PC-3 (cell line): ENCODE measurements at regions of chr18 and their contacts with region 1.

Region 1: DNA sequence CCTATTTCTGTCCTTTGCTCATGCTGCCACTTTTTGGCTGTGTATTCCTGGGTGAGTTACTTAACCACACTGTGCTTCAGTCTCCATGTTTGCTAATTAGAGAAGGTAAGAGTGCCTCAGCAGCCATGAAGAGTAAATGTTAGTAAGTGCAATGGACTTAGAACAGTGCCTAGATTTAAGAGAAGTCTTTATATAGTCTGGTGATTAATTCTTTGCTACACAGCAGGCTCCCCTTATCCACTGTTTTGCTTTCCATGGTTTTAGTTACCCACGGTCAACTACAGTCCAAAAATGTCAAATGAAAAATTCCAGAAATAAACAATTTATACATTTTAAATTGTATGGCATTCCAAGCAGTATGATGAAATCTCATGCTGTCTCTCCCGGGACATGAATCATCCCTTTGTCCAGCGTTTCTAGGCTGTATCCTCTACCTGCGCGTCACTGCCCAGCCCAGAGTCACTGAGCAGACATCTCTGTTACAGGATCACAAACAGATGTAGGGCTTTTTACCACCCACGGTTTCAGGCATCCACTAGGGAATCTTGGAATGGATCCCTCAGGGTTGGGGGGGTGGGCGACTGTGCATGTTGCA is 91.0 kb downstream of the CTIF start:
- DNase-seq: peak; percentile 57
- ATAC-seq: peak; percentile 99
- H3K4me3 ChIP-seq: no peak overlapping the region
- H3K27ac ChIP-seq: peak overlapping the region; percentile 41
- H3K4me1 ChIP-seq: peaks cover 10% of the 10 kb centered on the region
- H3K27me3 ChIP-seq: no peaks in the 10 kb centered on the region
- CTCF ChIP-seq: no peak

Region 2: DNA sequence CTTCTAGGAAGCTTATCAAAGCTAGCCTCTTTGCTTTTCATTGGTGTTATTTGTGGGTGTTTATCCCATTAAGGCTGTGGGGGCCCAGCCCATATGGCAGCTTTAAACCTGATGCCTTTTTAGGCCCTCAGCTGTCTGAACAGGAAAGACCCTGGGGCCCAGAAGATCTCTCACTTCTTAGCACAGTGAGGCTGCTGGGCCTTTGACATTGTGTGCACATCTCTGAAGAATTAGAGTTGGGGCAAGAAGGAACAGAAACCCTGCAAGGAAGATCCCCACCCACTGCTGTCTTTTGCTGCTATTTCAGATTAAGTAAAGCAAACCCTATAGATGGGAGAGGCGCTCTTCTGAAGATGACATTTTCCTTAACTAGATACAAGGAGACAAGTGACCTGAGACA is 949.3 kb before region 1 on chr18:
- CTCF ChIA-PET with region 1: no interaction called
- POLR2A ChIA-PET with region 1: no interaction called
- intact Hi-C with region 1: no loop called
- DNase-seq: no peak
- ATAC-seq: no peak
- H3K4me3 ChIP-seq: no peak overlapping the region
- H3K27ac ChIP-seq: no peak overlapping the region
- H3K4me1 ChIP-seq: no peaks in the 10 kb centered on the region
- H3K27me3 ChIP-seq: no peaks in the 10 kb centered on the region
- CTCF ChIP-seq: no peak

Region 3: GRCh38 chr18:48488388-48488850 is 141.4 kb before region 1 on chr18:
- CTCF ChIA-PET with region 1: no interaction called
- POLR2A ChIA-PET with region 1: no interaction called
- intact Hi-C with region 1: no loop called
- DNase-seq: peak; percentile 78
- ATAC-seq: peak; percentile 94
- H3K4me3 ChIP-seq: no peak overlapping the region
- H3K27ac ChIP-seq: no peak overlapping the region
- H3K4me1 ChIP-seq: peaks cover 11% of the 10 kb centered on the region
- H3K27me3 ChIP-seq: no peaks in the 10 kb centered on the region
- CTCF ChIP-seq: no peak

Region 4: DNA sequence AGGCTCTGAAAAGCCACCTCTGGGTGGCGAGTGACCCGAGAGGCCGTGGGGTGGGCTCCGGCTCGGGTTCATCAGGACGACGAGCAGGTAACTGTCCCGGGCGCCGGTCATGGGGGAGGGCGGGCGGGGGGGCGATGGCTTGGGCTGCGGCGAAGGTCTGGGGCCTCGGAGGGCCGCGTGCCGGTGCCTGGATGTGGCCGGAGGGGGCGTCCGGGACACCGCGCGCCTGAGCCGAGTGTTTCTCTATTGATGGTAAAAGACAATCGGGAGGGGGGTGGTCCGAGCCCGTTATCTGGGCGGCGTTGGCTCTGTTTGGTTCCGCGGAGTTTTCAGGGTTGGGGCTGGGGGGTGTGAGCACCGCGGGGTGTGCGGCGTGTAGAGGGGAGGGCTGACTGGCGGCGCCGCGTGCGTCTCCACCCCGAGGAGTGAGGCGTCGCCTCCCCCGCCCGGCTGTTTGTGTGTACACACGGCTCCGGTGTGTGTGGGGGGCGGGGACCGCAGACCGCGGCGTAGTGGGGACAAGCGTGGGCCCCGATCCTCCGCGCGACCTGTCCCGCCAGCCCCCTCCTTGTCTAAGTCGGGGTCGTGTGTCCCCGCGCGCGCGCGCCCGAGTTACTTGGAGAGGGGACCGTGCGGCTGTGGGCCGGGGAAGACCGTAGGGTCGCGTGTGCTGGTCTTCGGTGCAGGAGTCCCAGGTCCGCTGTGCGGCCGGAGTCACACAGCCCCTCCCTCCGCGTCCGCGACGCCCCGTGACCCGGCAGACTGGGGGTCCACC is 89.4 kb before region 1 on chr18:
- CTCF ChIA-PET with region 1: no interaction called
- POLR2A ChIA-PET with region 1: no interaction called
- intact Hi-C with region 1: loop called (anchors 2 kb)
- DNase-seq: peak; percentile 29
- ATAC-seq: peak; percentile 37
- H3K4me3 ChIP-seq: peak overlapping the region; percentile 76
- H3K27ac ChIP-seq: no peak overlapping the region
- H3K4me1 ChIP-seq: peaks cover 23% of the 10 kb centered on the region; the same call in 1 of the 2 replicates
- H3K27me3 ChIP-seq: no peaks in the 10 kb centered on the region
- CTCF ChIP-seq: no peak

Region 5: GRCh38 chr18:48554610-48555400 is 75.0 kb before region 1 on chr18:
- CTCF ChIA-PET with region 1: no interaction called
- POLR2A ChIA-PET with region 1: interaction called, 17 read pairs
- intact Hi-C with region 1: no loop called
- DNase-seq: no peak
- ATAC-seq: no peak
- H3K4me3 ChIP-seq: no peak overlapping the region
- H3K27ac ChIP-seq: no peak overlapping the region
- H3K4me1 ChIP-seq: no peaks in the 10 kb centered on the region
- H3K27me3 ChIP-seq: no peaks in the 10 kb centered on the region
- CTCF ChIP-seq: no peak

Region 6: GRCh38 chr18:48580782-48581181 is 49.0 kb before region 1 on chr18:
- CTCF ChIA-PET with region 1: no interaction called
- POLR2A ChIA-PET with region 1: no interaction called
- intact Hi-C with region 1: no loop called
- DNase-seq: no peak
- ATAC-seq: no peak
- H3K4me3 ChIP-seq: no peak overlapping the region
- H3K27ac ChIP-seq: no peak overlapping the region
- H3K4me1 ChIP-seq: no peaks in the 10 kb centered on the region
- H3K27me3 ChIP-seq: no peaks in the 10 kb centered on the region
- CTCF ChIP-seq: no peak

Region 7: DNA sequence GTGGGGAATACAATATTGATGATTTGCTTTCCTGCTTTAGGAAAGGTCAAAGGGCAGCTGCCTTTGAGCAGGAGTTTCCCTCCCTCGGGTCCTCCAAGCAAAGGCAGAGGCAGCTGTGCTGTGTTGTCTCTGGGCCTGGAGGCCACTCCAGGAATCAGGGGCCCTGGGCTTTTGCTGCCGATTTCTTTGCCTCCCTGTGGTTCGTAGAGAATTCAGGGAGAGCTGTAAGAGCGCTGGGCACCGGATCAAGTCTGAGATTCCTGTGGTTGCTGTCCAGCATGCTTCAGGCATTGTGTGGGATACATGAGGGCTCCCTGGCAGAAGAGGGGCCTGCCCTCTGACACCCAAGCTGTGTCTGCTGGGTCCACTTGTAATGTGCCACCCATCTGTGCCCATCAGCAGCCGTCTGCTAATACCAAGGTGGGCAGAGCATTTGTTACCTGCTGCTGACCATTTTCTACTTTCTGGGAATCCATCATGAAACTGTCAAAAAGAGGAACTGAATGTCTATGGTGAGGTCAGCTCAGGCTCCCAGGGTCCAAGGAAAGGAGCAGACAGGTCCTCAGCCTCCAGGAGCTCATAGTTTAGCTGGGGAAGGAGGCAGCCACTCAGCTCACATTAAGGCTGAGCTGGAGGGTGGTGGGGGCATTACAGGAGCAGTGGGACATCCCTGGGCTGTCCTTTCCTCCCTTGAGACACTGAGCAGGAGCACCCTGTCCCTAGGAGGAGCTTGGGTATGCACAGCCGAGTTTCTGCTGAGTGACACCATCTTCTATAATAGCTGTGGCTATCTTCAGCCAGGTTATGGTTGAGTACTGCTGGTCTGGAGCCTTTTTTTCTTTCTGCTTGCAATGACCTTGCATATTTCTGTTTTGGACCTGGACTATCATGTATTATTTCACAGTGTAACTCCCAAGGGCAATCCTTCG is 22.5 kb before region 1 on chr18:
- CTCF ChIA-PET with region 1: no interaction called
- POLR2A ChIA-PET with region 1: no interaction called
- intact Hi-C with region 1: no loop called
- DNase-seq: no peak
- ATAC-seq: no peak
- H3K4me3 ChIP-seq: no peak overlapping the region
- H3K27ac ChIP-seq: no peak overlapping the region
- H3K4me1 ChIP-seq: no peaks in the 10 kb centered on the region
- H3K27me3 ChIP-seq: no peaks in the 10 kb centered on the region
- CTCF ChIP-seq: no peak